Right ventricle myocardium inferior (tissue), 1 donor: ENCODE measurements at regions of chr4 and their contacts with region 1.

Region 1: DNA sequence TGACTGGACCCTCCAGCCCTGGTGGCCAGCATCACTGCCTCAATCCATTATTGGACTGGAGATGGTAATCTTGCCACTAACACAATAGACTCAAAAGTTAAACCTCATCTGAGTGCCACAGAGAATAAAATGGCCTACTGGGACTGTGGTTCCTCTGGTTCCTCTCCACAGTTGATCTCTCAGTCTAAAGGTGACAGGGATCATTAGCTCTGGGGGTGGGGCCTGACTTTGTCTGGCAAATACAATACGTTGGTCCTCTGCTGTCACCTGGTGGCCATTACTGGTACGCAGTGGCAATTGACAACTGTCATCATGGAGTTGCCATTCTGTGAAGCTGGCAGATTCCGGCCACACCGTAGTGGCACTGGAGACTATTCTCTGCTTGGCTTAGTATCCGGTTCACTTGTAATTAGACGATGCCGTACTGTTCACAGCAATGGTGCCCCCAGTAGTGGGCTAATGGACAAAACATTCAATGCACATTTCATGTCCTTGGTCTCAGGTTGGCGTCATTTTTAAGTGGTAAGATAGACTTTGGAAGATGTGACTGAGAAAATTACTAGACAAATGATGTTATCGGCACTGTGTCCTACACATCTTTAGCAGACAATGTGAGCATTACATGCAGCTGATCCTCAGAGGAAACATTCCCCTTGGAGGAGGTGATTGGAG is 6.7 kb downstream of the FGFBP2 start:
- DNase-seq: no peak
- ATAC-seq: peak; percentile 91

Region 2: DNA sequence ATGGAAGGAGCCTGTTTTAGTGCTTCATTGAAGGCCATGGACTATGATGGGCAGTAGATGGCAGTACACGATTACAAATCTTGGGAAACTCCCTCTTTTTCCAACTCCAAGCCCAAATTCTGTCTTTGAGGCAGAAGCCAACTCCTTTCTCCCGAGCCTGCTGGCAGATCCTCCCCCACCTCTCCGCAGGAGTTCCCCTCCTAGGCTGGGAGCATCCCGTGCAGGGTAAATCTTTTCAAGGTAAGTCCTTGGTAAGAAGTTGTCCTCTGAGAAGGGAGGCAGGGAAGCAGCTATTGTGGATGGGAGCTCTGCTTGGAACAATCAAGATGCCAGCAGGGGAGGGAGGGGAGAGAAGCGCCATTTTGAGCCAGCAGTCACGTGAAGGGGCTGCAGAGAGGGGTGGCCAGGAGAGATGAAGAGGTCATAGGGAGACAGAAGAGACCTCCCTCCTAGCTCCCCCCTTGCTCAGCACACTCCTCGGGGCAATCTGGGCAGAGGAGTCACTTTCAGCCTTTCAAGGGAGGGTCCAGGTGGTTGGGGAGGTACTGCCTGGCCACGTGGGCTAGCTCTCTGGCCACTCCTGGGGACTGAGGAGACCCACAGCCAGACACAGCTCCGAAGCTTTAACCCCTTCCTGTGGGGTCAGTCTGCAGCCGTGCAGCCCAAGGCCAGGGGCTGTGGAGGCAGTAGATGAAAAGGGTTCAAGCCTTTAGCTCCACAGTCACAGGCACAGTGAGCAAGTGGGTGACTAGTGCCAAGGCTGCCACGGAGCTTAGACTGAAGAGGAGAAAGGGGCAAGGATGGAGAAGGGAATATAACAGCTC is 477.0 kb before region 1 on chr4:
- intact Hi-C with region 1: loop called (anchors 5 kb)
- DNase-seq: no peak
- ATAC-seq: peak; percentile 82

Region 3: DNA sequence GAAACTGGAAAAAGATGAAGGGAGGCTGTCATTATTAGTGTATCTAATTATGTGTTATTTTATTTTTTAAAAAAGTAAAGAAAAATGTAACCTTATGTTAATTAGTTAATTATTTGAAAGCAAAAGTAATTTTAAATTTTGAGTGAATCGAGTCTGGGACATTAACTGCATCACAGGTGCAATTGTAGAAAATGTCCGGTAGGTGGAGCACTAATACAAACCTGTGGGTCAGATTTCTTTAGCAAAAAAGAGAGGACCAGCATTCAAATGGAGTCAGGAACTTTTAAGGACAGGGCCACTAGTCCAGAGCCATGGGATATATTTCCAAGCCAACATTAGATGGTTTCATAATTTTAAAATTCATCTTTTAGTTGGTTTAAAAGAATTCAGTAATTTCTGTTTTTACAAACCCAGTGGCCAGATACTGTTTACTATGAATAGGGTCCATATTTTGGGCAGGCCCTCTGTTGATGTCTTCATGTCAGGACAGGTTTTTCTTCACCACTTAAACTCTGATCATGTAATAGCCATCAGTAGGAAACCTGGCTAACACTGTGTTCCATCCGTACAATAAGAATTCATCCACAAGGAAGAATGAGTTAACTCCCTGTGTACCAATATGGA is 226.3 kb before region 1 on chr4:
- intact Hi-C with region 1: loop called (anchors 5 kb)
- DNase-seq: no peak
- ATAC-seq: no peak

Region 4: DNA sequence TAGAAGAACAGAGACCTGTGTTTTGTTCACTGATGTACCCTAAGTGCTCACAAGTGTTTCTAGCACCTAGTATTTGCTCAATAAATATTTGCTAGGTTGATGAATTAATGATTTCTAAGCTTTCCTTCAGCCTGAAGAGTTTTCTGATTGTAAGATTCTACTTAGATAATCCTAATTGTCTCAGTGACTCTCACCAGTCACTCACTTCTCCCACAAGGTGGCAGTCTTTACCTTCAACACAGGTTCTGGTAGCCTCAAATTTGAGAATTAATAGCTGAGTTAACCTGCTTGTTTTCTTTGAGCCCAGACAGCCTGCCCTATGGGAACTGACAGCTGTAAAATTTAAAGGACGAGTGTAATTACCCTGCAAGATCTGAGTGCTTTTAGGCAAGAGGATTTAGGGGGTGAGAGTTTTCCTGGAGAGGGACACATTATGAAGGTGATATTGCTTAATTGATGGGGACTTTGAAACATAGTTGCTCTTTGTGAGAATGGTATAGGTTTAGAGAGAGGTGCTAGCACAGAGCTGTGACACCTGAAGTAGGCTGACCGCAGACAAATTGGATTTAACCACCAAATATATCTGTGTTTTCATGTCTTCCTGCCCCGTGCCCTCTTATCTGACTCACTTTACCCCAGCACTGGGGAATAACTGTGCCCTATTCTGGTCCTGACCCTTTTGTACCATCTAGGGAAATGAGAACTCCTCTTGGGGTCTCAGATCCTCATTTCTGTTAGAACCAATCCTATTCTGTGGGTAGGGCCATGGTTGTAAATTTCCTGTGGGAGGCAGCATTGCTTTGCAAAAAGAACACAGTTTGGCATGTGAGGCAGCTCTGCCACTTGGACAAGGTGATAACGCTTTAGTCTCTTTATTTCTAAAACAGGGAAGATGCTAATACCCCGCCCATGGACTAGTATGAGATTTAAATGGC is 150.5 kb before region 1 on chr4:
- intact Hi-C with region 1: loop called (anchors 1 kb)
- DNase-seq: no peak
- ATAC-seq: peak; percentile 82

Region 5: DNA sequence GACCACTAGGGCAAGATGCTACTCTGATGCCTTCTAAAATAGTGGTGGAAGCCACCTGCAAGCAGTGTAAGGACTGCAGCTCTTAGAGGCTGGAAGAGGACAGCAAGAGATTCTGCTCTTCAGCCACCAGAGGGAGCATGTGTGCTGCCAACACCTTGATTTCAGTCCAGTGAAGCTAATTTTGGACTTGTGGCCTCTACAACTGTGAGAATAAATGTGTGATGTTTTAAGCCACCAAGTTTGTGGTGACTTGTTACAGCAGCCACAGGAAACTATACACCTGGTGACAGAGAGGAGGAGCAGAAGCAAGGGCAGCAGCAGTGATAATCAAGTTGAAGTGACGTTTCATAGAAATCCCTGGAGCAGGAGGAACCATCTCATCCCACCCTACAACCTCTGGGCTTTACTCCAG is 73.6 kb before region 1 on chr4:
- intact Hi-C with region 1: loop called (anchors 1 kb)
- DNase-seq: no peak
- ATAC-seq: peak; percentile 89